Activated CD8-positive, alpha-beta T cell treated with anti-CD3 and anti-CD28 coated beads for 36 hours (primary cell): ENCODE measurements at regions of chr22 and their contacts with region 1.

Region 1: DNA sequence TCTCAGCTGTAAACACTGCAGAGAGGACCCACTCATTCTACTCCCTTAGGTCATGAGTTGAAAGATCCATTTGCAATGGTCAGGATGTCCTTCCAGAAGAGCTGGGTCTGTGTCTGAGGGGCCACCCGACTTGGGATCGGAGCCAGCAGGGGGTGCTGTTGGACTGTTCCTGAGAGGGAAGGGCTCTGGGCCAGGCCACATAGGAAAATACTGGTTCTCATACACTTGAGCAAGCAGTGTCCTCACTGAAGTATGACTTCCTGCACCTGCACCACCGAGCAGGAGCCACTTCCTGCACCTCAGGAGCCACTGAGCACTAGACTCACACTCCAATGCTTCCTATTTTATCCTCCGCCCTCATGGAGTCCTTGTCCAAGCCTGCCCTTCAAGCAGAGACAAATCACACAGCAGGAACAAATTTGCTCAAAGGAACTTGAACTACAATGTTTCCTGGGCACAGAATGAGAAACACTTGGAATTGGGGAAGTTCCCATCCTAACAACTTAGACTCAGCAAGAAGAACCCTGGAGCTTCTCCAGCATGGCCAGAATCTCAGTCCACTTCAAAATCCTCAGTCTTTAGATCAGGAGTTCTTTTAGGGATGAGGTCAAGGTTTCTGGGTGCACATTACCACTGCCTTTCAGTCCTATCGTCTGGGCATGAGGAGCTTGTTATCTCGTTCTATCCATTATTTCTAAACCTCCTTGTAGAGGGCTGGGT is 36.6 kb upstream of the VPREB1 start:
- DNase-seq: peak; percentile 93
- ATAC-seq: peak; percentile 62
- H3K4me3 Mint-ChIP-seq: no peak overlapping the region
- H3K27ac Mint-ChIP-seq: peak overlapping the region; percentile 61
- H3K4me1 Mint-ChIP-seq: peaks cover 34% of the 10 kb centered on the region
- H3K27me3 Mint-ChIP-seq: no peaks in the 10 kb centered on the region
- CTCF ChIP-seq: peak; percentile 84

Region 2: DNA sequence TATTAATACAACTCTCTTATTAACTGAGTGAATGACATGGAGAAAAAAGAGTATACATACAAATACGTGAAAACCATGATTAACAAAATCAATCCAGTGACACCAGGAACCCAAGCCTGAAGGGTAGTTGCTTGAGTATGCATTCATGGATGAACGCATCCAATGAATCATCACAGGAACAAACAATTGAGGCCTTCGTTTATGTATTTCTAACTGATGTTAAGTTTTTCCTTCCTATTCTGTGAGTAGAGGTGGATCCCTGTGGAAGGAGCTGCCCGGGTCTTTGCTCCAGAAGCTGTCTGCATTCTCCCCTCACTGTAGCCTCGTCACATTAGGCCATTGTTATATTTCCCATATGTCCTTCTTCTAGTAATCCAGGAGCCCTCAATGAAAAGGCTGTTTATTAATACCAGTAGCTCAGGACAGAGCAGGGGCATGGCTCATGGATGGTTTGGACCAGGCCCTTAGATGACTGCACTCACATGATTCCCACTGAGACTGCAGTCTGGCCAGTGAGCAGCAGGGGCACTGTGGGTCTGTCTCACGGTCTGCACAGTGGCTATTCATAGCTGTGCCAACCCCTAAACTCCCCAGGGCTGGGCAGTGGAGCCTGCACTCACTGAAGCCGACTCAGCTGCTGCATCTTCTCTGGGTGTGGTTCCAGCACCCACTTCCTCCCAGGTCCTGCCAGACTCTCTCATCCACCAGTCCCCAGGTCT is 97.3 kb before region 1 on chr22:
- CTCF ChIA-PET with region 1: no interaction called
- POLR2A ChIA-PET with region 1: no interaction called
- intact Hi-C with region 1: no loop called
- DNase-seq: peak; percentile 68
- ATAC-seq: peak; percentile 90
- H3K4me3 Mint-ChIP-seq: no peak overlapping the region
- H3K27ac Mint-ChIP-seq: no peak overlapping the region
- H3K4me1 Mint-ChIP-seq: peaks cover 10% of the 10 kb centered on the region
- H3K27me3 Mint-ChIP-seq: no peaks in the 10 kb centered on the region
- CTCF ChIP-seq: peak; percentile 60

Region 3: GRCh38 chr22:22168190-22168940 is 39.6 kb before region 1 on chr22:
- CTCF ChIA-PET with region 1: interaction called, 10 read pairs
- POLR2A ChIA-PET with region 1: no interaction called
- intact Hi-C with region 1: no loop called
- DNase-seq: peak; percentile 16
- ATAC-seq: peak; percentile 39
- H3K4me3 Mint-ChIP-seq: peak overlapping the region; percentile 31
- H3K27ac Mint-ChIP-seq: peak overlapping the region; percentile 42
- H3K4me1 Mint-ChIP-seq: peaks cover 12% of the 10 kb centered on the region
- H3K27me3 Mint-ChIP-seq: no peaks in the 10 kb centered on the region
- CTCF ChIP-seq: no peak

Region 4: DNA sequence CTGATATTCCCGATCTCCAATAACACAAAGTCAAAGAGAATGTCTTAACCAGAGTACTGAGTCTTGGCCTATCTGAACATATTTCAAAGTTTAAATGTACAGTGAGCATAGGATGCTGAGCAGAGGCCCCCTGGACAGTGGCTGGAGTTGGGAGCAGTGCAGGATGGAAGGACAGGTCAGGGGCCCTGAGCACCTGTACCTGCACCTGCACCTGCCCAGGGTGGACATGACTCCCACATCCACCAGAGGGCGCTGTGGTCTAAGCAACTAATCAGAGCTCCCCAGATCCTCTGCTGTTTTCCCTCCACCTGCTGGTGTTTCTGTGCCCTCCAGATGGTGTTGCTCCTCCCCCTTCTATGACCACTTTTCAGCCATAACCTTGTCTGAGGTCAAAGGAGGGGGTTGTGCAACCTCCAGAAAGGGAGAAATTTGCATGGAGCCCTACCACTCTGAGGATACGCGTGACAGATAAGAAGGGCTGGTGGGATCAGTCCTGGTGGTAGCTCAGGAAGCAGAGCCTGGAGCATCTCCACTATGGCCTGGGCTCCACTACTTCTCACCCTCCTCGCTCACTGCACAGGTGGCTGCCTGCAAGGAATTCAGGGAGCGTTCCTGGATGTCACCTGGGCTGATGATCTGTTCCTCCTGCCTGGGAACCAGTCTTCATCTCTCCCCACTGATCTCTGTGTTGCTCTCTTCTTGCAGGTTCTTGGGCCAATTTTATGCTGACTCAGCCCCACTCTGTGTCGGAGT is 12.6 kb before region 1 on chr22:
- CTCF ChIA-PET with region 1: interaction called, 61 read pairs
- POLR2A ChIA-PET with region 1: no interaction called
- intact Hi-C with region 1: no loop called
- DNase-seq: peak; percentile 91
- ATAC-seq: peak; percentile 98
- H3K4me3 Mint-ChIP-seq: no peak overlapping the region
- H3K27ac Mint-ChIP-seq: no peak overlapping the region
- H3K4me1 Mint-ChIP-seq: no peaks in the 10 kb centered on the region
- H3K27me3 Mint-ChIP-seq: peaks cover 7% of the 10 kb centered on the region
- CTCF ChIP-seq: peak; percentile 97

Region 5: GRCh38 chr22:22226448-22227187 is 18.6 kb after region 1 on chr22:
- CTCF ChIA-PET with region 1: interaction called, 227 read pairs
- POLR2A ChIA-PET with region 1: interaction called, 6 read pairs
- intact Hi-C with region 1: no loop called
- DNase-seq: no peak
- ATAC-seq: no peak
- H3K4me3 Mint-ChIP-seq: no peak overlapping the region
- H3K27ac Mint-ChIP-seq: no peak overlapping the region
- H3K4me1 Mint-ChIP-seq: no peaks in the 10 kb centered on the region
- H3K27me3 Mint-ChIP-seq: peaks cover 5% of the 10 kb centered on the region
- CTCF ChIP-seq: no peak

Region 6: DNA sequence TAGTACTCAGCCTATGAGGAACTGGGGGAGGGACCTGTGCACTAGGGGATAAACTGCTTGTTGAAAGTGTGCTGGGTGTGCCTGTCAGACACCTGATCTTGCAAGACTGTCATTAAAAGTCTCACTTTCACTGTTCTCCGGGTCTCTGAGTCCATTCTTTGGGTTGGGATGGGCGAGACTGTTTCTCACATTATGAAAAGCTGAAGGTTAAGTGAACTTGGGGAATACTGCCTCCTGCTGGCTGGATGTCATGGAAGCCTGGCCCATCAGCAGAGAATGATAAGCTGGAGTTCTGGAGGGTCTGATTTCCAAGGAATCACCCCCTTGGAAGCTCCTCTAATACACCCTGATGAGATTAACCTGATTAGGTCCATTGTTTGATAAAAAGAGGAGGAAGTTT is 27.6 kb after region 1 on chr22:
- CTCF ChIA-PET with region 1: interaction called, 227 read pairs
- POLR2A ChIA-PET with region 1: interaction called, 6 read pairs
- intact Hi-C with region 1: no loop called
- DNase-seq: peak; percentile 81
- ATAC-seq: peak; percentile 60
- H3K4me3 Mint-ChIP-seq: no peak overlapping the region
- H3K27ac Mint-ChIP-seq: no peak overlapping the region
- H3K4me1 Mint-ChIP-seq: peaks cover 3% of the 10 kb centered on the region
- H3K27me3 Mint-ChIP-seq: no peaks in the 10 kb centered on the region
- CTCF ChIP-seq: peak; percentile 77

Region 7: GRCh38 chr22:22380098-22381030 is 172.4 kb after region 1 on chr22:
- CTCF ChIA-PET with region 1: no interaction called
- POLR2A ChIA-PET with region 1: no interaction called
- intact Hi-C with region 1: no loop called
- DNase-seq: peak; percentile 27
- ATAC-seq: peak; percentile 27
- H3K4me3 Mint-ChIP-seq: no peak overlapping the region
- H3K27ac Mint-ChIP-seq: no peak overlapping the region
- H3K4me1 Mint-ChIP-seq: no peaks in the 10 kb centered on the region
- H3K27me3 Mint-ChIP-seq: peaks cover 28% of the 10 kb centered on the region
- CTCF ChIP-seq: peak; percentile 11